Activated CD4-positive, alpha-beta T cell treated with anti-CD3 and anti-CD28 coated beads for 36 hours (primary cell): ENCODE measurements at regions of chr4 and their contacts with region 1.

Region 1: GRCh38 chr4:114927881-114928280 is 185.5 kb downstream of the NDST4 start:
- DNase-seq: no peak
- ATAC-seq: no peak
- H3K4me3 Mint-ChIP-seq: no peak overlapping the region
- H3K27ac Mint-ChIP-seq: no peak overlapping the region
- H3K4me1 Mint-ChIP-seq: no peaks in the 10 kb centered on the region
- H3K27me3 Mint-ChIP-seq: no peaks in the 10 kb centered on the region

Region 2: DNA sequence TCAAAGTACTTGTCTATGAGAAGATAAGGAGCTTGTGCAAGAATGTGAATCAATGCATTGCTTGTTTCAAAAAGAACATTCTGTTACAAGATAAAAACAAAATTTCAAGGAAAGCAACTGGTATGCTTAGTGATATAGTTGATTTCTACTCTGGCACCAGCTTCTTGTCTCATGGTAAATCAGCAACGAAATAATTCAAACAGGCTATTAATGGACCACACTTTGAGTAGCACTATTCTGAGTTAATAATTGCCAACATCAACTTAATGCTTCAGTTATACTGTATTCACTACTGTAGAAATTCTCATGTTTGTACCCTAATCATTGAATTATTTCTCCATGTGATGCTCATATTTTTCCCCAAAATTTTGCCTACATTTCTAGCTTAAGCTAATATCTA is 67.1 kb before region 1 on chr4:
- CTCF ChIA-PET with region 1: no interaction called
- POLR2A ChIA-PET with region 1: no interaction called
- intact Hi-C with region 1: loop called in 1 of 2 experiments (anchors 2 kb)
- DNase-seq: no peak
- ATAC-seq: no peak
- H3K4me3 Mint-ChIP-seq: no peak overlapping the region
- H3K27ac Mint-ChIP-seq: no peak overlapping the region
- H3K4me1 Mint-ChIP-seq: no peaks in the 10 kb centered on the region
- H3K27me3 Mint-ChIP-seq: no peaks in the 10 kb centered on the region